ENCODE measurements at regions of chr3 and their contacts with region 1.

Region 1: GRCh38 chr3:10115326-10116137 is at the start of gene BRK1:
- DNase-seq: peak; percentile 98
- H3K4me3 ChIP-seq: peak within 1 kb of the TSS; percentile 84 to 89 (median 88)
- H3K27ac ChIP-seq: peak within 1 kb of the TSS; percentile 83 to 89 (median 86)
- H3K4me1 ChIP-seq: peaks cover 25 to 50% (median 39%) of the 10 kb centered on the region in 4 donors
- H3K27me3 ChIP-seq: no peaks in the 10 kb centered on the region
- CTCF ChIP-seq: peak in 1 of 3 experiments; percentile 17
- EP300 ChIP-seq: no peak
- POLR2A ChIP-seq: peak; percentile 50
- total RNA-seq, gene BRK1: 107 to 148 (median 142) TPM

Region 2: DNA sequence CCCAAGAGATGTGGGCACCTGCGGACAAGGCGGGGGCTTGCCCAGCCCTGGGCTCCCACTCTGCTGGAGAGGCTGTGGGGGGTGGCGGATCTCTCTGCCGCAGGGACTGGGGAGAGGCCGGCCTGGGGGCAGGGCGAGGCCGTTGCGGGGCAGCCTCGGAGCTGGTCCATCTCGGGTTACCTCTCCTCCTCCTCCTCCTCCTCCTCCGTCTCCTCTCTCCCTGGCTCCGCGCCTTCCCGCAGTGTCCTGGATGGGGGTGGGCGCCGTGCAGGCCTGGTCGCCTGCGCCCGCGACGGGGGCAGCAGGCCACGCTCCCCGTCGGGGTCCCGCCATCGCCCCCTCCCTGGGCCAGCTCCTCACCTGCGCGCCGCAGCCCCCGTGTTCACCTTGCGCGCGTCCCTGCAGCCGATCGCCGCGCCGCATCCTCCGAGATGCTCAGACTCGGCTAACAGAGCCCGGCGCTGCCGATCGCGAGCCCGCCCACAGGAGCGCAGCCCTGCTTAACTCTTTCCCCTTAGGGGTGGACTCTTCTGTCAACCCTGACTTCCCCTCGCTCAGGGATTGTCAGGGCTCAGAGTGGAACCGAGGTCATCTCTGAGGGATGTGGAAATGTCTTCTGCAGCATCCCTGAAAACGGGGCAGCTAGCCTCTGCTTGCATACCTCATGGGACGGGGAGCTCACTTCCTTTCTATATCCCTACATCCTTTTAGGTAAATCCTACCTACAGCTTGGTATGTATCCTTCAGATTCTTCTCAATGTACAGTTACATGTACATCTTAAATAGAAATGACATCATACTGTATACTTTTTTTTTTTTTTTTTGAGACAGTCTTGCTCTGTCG is 163.3 kb before region 1 on chr3 and contains the start of gene PRRT3:
- intact Hi-C with region 1: loop called (anchors 10 kb)
- DNase-seq: no peak
- H3K4me3 ChIP-seq: peak within 1 kb of the TSS; percentile 56 to 77 (median 62)
- H3K27ac ChIP-seq: no peak within 1 kb of the TSS
- H3K4me1 ChIP-seq: peaks cover 17 to 51% (median 36%) of the 10 kb centered on the region in 4 donors
- H3K27me3 ChIP-seq: peaks cover 0 to 8% (median 0%) of the 10 kb centered on the region in 4 donors
- CTCF ChIP-seq: no peak
- EP300 ChIP-seq: no peak
- POLR2A ChIP-seq: no peak
- total RNA-seq, gene PRRT3: 0.83 to 2.5 (median 2.0) TPM